ENCODE measurements at regions of chr18 and their contacts with region 1.

Region 1: DNA sequence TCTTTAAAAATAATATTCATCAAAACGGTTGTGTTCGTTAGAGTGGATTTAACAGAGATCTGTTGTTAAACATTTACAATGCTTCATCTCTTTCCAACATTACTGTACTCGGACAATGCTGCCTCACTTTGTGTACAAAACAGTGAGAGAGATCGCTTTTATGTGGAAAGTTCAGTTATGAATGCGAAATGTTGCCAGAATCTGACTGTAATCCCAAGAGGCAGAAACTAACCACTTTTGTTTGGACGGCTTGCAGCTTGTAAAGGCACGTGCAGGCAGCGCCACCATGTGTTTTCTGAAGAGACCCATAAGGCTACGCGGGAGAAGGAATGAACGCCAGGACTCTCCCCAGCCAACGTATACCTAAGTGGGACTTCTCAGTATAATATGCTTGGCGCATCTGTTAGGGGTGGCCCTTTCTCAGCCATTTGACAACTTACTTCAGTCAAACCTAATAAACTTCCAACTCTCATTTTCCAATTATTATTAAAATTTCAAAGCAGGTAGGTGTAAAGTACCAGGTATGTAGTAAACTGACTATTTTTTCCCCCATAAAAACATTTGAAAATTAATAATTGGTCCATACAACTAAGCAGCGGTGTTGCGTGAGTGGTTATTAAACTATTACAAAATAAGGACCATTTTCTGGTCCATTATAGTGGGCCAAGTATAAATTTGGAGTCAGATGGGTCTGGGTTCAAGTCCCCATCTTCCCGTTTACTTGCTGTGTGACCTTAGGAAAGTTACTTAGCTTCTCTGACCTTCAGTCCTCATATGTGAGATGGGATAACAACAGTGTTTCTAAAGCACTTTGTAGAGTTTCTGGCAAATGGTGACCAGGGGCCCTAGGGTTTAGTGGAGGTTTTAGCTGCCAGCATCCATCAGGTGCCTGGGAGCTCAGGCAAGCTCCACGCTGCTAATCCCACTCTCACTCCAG is 5.6 kb upstream of the NAPG start:
- DNase-seq: peak; percentile 82 to 93 (median 87)
- H3K4me3 ChIP-seq: no peak overlapping the region
- H3K27ac ChIP-seq: no peak overlapping the region
- H3K4me1 ChIP-seq: peaks cover 4% of the 10 kb centered on the region
- H3K27me3 ChIP-seq: no peaks in the 10 kb centered on the region
- CTCF ChIP-seq: peak; percentile 76 to 94 (median 77)
- EP300 ChIP-seq: no peak
- POLR2A ChIP-seq: no peak

Region 2: DNA sequence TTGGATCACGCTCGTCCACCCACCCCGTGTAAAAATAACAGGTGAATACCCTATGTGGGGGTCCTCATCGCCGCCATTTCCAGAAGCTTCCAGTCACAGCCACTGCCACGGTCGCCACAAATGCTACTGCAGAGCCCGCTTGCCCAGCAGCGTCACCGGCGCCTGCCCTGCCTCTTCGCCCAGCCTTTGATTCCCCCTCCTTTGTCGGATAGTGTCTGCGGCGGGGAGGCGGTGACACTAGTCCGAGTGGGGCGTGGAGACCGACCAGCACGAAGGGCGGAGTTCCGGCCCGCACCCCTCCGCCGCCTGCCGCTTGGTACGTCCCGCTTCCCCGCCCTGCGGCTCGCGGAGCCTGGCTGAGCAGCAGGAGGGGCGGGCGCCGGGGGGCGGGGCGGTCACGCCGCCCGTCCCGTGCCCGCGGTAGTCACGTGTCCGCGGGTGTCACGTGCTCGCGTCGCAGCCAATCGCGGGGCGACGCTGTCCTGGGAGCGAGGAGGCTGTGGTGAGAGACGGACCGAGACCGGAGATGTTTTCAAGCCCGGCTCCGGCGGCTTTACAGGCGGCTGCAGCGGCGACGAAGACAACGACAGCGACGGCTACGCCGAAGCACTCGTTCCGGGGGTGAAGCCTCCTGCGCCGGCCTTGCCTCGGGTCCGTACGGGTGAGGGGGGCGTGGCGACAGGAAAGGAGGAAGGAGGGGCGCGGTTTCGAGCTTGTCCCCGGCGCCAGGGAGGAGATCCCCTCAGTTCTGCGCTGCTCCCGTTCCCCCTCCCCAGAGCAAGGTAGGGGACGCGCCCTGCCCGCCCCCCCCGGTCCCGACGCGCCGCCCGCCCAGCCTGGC is 1383.7 kb before region 1 on chr18 and contains the start of gene ANKRD12:
- intact Hi-C with region 1: loop called in 1 of 4 experiments (anchors 5 kb)
- DNase-seq: peak; percentile 94 to 97 (median 96)
- H3K4me3 ChIP-seq: peak within 1 kb of the TSS; percentile 91
- H3K27ac ChIP-seq: peak within 1 kb of the TSS; percentile 99
- H3K4me1 ChIP-seq: no peaks in the 10 kb centered on the region
- H3K27me3 ChIP-seq: no peaks in the 10 kb centered on the region
- CTCF ChIP-seq: no peak
- EP300 ChIP-seq: no peak
- POLR2A ChIP-seq: peak; percentile 91
- total RNA-seq, gene ANKRD12: 27.0 to 115 (median 76.4) TPM

Region 3: GRCh38 chr18:9319333-9319732 is 1200.9 kb before region 1 on chr18:
- intact Hi-C with region 1: no loop called
- DNase-seq: no peak
- H3K4me3 ChIP-seq: no peak overlapping the region
- H3K27ac ChIP-seq: no peak overlapping the region
- H3K4me1 ChIP-seq: no peaks in the 10 kb centered on the region
- H3K27me3 ChIP-seq: no peaks in the 10 kb centered on the region
- CTCF ChIP-seq: no peak
- EP300 ChIP-seq: no peak
- POLR2A ChIP-seq: no peak

Region 4: GRCh38 chr18:10006311-10006893 is 513.9 kb before region 1 on chr18:
- intact Hi-C with region 1: loop called in 1 of 4 experiments (anchors 10 kb)
- DNase-seq: no peak
- H3K4me3 ChIP-seq: no peak overlapping the region
- H3K27ac ChIP-seq: no peak overlapping the region
- H3K4me1 ChIP-seq: peaks cover 6% of the 10 kb centered on the region
- H3K27me3 ChIP-seq: no peaks in the 10 kb centered on the region
- CTCF ChIP-seq: peak in 1 of 3 donors; percentile 22
- EP300 ChIP-seq: no peak
- POLR2A ChIP-seq: no peak

Region 5: DNA sequence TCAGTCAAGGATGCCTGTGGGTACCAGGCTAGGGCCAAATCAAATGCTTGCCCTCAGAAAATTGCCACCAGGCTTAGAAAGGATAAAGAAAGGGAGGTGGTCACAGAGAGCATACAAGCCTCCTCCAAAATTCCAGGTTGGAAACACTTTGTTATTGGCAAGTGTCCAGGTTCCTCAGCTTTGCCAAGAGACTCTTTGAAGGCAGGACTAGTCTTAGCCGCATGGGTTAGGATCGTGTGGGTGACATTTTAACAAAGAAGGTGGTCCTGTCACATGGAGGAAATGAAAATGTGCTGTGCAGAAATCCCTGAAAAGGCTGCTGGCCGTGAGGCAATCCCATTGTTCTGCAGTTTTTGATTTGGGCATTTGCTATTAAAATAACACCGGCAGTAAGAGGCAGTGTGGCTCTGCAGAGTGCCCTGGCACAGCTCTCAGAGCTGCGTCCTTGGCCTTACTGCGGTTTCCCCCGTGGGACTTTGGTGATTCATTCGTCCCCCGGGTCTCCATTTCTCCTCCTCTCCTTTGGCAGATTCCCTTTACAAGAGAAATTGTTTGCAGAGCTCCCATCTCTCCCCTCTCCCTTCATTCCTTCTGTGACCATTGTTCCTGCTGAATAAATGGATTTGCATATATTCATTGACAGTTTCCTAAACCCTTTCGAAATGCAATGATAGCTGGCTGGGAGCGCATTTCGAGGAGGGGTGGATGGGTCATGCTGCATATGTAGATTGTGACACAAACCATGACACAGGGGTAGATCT is 419.1 kb before region 1 on chr18:
- intact Hi-C with region 1: loop called in 1 of 4 experiments (anchors 10 kb)
- DNase-seq: peak; percentile 69 to 81 (median 76)
- H3K4me3 ChIP-seq: no peak overlapping the region
- H3K27ac ChIP-seq: peak overlapping the region in 1 of 2 donors; percentile 63
- H3K4me1 ChIP-seq: peaks cover 21% of the 10 kb centered on the region
- H3K27me3 ChIP-seq: no peaks in the 10 kb centered on the region
- CTCF ChIP-seq: no peak
- EP300 ChIP-seq: no peak
- POLR2A ChIP-seq: no peak

Region 6: DNA sequence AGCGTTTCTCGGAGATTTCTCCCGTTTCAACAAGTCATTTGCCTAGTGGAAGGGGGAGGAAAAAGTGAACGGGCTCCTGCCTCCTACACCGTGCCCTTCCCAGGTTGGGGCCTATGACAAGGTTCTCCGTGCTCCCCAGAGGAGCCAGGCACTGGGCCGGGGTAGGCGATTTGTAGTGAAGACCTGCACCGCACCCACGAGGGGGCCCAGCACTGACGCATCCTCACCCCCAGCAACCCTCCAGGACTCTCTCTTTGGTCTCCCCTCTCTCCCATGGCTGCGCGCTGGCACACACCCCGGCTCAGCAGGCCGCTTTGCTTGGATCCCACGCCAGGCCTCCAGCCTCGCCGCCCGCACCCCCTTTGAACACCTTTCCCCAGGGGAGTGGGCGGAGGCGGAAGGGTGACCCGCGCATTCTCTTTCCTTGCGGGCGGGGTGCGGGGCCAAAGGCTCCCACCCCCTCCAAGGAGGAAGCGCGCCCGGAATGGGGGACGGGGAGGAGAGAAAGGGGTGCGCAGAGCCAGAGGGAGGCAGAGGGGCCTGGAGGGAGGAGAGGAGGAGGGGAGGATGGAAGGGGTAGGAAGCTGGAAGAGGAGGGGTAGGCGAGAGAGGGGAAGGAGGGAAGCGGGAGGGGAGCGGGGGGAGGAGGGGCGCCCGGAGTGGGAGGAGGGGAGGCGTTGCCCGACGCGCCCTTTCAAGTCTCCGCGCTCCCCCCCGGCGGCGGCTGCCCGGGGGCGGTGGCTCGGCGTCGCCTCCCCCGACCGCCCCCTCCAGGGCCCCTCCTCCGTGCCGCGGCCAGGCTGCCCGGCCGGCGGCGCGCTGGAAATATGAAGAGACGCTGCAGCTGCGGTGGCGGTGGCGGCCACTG is 66.2 kb before region 1 on chr18 and contains the start of gene APCDD1:
- intact Hi-C with region 1: loop called in 2 of 4 experiments (anchors 10 kb)
- DNase-seq: peak; percentile 88 to 93 (median 92)
- H3K4me3 ChIP-seq: peak within 1 kb of the TSS; percentile 71
- H3K27ac ChIP-seq: peak within 1 kb of the TSS; percentile 42 to 96
- H3K4me1 ChIP-seq: peaks cover 9% of the 10 kb centered on the region
- H3K27me3 ChIP-seq: no peaks in the 10 kb centered on the region
- CTCF ChIP-seq: peak in 1 of 3 donors; percentile 22
- EP300 ChIP-seq: no peak
- POLR2A ChIP-seq: peak; percentile 54
- total RNA-seq, gene APCDD1: 21.1 to 112 (median 60.6) TPM

Region 7: GRCh38 chr18:10579079-10579867 is 59.0 kb after region 1 on chr18:
- intact Hi-C with region 1: no loop called
- DNase-seq: no peak
- H3K4me3 ChIP-seq: no peak overlapping the region
- H3K27ac ChIP-seq: no peak overlapping the region
- H3K4me1 ChIP-seq: no peaks in the 10 kb centered on the region
- H3K27me3 ChIP-seq: no peaks in the 10 kb centered on the region
- CTCF ChIP-seq: no peak
- EP300 ChIP-seq: no peak
- POLR2A ChIP-seq: no peak